Caco-2 (cell line): ENCODE measurements at regions of chr17 and their contacts with region 1.

Region 1: DNA sequence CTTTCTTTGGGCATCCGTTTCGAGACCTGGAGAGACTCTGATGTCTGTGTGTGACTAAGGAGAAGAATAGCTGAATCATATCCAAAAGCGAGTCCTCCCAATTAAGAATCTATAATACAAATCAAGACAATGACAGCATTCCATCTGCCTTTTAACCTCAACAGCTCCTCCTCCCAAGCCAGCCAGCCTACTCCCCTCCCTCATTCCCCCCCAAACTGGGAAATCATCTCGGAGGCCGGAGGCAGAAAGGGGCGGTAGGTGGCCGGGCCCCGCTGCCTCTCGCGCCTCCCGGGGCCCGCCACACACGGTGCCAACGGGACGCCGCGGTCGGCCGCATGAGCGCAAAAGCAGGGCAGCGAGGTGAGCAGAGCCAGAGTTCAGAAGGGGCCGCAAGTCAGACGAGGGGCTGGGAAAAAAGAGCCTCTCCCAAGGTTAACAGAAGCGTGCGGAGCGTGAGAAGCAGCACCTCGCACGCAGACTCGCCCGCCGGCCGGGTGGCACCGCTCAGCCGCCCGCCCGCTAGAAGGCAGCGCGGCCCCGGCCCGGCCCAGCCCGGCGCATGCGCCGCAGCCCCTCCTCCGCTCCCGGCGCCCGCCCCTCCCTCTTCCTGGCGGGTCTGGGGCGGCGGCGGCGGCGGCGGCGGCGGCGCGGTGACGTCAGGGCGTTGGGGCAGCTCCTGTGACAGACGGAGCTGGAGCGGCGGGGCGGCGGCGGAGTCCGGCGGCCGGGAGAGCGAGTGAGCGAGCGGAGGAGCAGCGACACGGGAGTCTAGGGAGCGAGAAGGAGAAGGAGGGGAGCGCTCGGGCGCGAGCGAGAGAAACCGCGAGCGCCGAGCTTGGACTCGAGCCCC is at the start of gene PAFAH1B1:
- DNase-seq: peak; percentile 93 to 97
- H3K4me3 ChIP-seq: peak within 1 kb of the TSS; percentile 100
- H3K4me3 Mint-ChIP-seq: peak within 1 kb of the TSS; percentile 85
- H3K27ac Mint-ChIP-seq: peak within 1 kb of the TSS; percentile 96
- H3K4me1 ChIP-seq: peaks cover 15% of the 10 kb centered on the region; the same call in 1 of the 2 replicates
- H3K4me1 Mint-ChIP-seq: peaks cover 8% of the 10 kb centered on the region
- H3K27me3 ChIP-seq: no peaks in the 10 kb centered on the region
- H3K27me3 Mint-ChIP-seq: no peaks in the 10 kb centered on the region
- CTCF ChIP-seq: peak; percentile 11 to 16
- total RNA-seq, gene PAFAH1B1: 141 and 153 TPM in 2 replicates

Region 2: DNA sequence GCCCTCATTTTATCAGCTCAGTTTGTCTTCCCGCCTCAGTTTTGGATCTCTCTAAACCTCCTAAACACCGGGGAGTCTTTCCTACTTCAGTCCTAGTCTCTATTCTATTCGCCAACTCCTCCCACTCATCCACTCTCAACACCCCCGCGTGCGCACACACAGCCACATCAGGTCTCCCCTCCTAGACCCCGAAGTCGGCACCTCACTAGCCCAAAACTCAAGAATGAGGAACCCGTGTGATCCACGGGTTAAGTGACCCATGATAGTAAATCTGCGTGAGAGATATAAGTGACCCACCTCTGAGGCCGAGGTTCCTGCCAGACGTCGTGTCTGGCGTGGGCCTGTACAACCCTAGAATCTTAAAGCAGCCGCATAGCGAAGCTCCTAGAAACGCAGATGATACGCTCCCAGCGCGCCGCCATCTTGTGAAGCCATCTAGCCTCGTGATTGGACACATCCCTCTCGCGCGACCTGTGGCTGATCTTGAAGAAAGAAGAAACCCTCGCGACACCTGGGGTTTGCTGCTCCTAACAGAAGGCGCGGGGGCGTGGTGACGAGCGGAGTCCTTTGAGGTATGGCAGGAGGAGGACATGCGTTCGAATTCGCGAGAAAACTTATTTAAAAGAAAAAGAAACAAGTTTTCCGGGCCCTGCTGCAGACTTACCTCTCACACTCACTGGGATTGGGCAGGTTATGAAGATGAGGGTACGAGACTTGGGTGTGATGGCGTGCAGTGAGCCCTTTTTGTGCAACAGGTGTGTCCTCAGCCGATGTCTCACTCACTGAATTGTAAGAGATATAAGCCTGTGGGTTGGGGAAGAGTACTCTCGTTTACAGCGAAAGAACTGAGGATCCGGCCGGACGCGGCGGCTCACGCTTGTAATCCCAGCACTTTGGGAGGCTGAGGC is 81.5 kb before region 1 on chr17 and contains the start of gene METTL16:
- CTCF ChIA-PET with region 1: interaction called, 3 read pairs
- POLR2A ChIA-PET with region 1: interaction called, 12 read pairs
- intact Hi-C with region 1: loop called (anchors 5 kb)
- DNase-seq: peak; percentile 98 to 99
- H3K4me3 ChIP-seq: peak within 1 kb of the TSS; percentile 53
- H3K4me3 Mint-ChIP-seq: no peak within 1 kb of the TSS
- H3K27ac Mint-ChIP-seq: no peak within 1 kb of the TSS
- H3K4me1 ChIP-seq: peaks cover 7% of the 10 kb centered on the region
- H3K4me1 Mint-ChIP-seq: peaks cover 12% of the 10 kb centered on the region
- H3K27me3 ChIP-seq: no peaks in the 10 kb centered on the region
- H3K27me3 Mint-ChIP-seq: no peaks in the 10 kb centered on the region
- CTCF ChIP-seq: no peak
- total RNA-seq, gene METTL16: 50.4 and 58.4 TPM in 2 replicates

Region 3: DNA sequence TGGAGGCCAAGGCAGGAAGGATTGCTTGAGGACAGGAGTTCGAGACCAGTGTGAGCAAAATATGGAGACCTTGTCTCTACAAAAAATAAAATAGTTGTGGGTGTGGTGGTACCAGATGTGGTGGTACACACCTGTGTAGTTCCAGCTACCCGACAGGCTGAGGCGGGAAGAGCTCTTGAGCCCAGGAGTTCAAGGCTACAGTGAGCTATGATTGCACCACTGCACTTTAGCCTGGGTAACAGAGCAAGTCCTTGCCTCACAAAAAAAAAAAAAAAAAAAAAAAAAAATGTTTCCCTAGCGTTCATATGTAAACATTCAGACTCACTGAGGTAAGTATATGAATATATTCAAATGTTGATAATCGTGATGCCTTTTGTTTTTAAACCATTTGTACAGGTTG is 78.8 kb after region 1 on chr17:
- CTCF ChIA-PET with region 1: no interaction called
- POLR2A ChIA-PET with region 1: no interaction called
- intact Hi-C with region 1: no loop called
- DNase-seq: no peak
- H3K4me3 ChIP-seq: no peak overlapping the region
- H3K4me3 Mint-ChIP-seq: no peak overlapping the region
- H3K27ac Mint-ChIP-seq: no peak overlapping the region
- H3K4me1 ChIP-seq: no peaks in the 10 kb centered on the region
- H3K4me1 Mint-ChIP-seq: no peaks in the 10 kb centered on the region
- H3K27me3 ChIP-seq: no peaks in the 10 kb centered on the region
- H3K27me3 Mint-ChIP-seq: no peaks in the 10 kb centered on the region
- CTCF ChIP-seq: no peak

Region 4: GRCh38 chr17:2711601-2712299 is 118.6 kb after region 1 on chr17 and contains the start of gene CLUH:
- CTCF ChIA-PET with region 1: no interaction called
- POLR2A ChIA-PET with region 1: no interaction called
- intact Hi-C with region 1: loop called (anchors 5 kb)
- DNase-seq: peak; percentile 95 to 96
- H3K4me3 ChIP-seq: peak within 1 kb of the TSS; percentile 95
- H3K4me3 Mint-ChIP-seq: peak within 1 kb of the TSS; percentile 98
- H3K27ac Mint-ChIP-seq: peak within 1 kb of the TSS; percentile 97
- H3K4me1 ChIP-seq: peaks cover 17% of the 10 kb centered on the region
- H3K4me1 Mint-ChIP-seq: peaks cover 24% of the 10 kb centered on the region
- H3K27me3 ChIP-seq: no peaks in the 10 kb centered on the region
- H3K27me3 Mint-ChIP-seq: no peaks in the 10 kb centered on the region
- CTCF ChIP-seq: no peak
- total RNA-seq, gene CLUH: 161 and 164 TPM in 2 replicates

Region 5: DNA sequence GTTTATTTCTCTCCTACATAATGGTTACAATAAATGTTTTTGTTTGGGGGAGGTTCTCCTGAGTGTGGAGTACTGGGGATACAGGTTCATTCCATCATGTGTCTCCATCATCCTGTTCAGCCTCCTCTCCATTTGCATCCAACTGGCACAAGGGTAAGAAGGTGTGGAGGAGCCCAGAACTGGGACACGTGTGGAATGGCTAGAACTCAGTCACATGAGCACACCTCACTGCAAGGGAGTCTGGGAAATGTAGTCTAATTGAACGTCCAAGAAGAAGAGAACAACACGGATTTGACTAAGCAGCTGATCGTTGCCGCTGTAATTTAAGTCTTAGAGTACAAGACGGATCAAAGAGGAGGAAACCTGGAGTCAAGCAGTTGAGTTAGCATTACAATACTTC is 620.4 kb after region 1 on chr17:
- CTCF ChIA-PET with region 1: no interaction called
- POLR2A ChIA-PET with region 1: no interaction called
- intact Hi-C with region 1: no loop called
- DNase-seq: no peak
- H3K4me3 ChIP-seq: no peak overlapping the region
- H3K4me3 Mint-ChIP-seq: no peak overlapping the region
- H3K27ac Mint-ChIP-seq: no peak overlapping the region
- H3K4me1 ChIP-seq: no peaks in the 10 kb centered on the region
- H3K4me1 Mint-ChIP-seq: no peaks in the 10 kb centered on the region
- H3K27me3 ChIP-seq: no peaks in the 10 kb centered on the region
- H3K27me3 Mint-ChIP-seq: peaks cover 10% of the 10 kb centered on the region
- CTCF ChIP-seq: no peak